CD8-positive, alpha-beta T cell (primary cell): ENCODE measurements at regions of chr17 and their contacts with region 1.

Region 1: GRCh38 chr17:19766422-19767270 is 18.5 kb upstream of the ALDH3A1 start:
- DNase-seq: peak; percentile 55 to 90 (median 78)
- ATAC-seq: peak; percentile 92
- H3K4me3 ChIP-seq: no peak overlapping the region
- H3K4me3 Mint-ChIP-seq: no peak overlapping the region
- H3K27ac ChIP-seq: no peak overlapping the region
- H3K27ac Mint-ChIP-seq: no peak overlapping the region
- H3K4me1 ChIP-seq: peaks cover 22% of the 10 kb centered on the region
- H3K4me1 Mint-ChIP-seq: peaks cover 22% of the 10 kb centered on the region
- H3K27me3 ChIP-seq: no peaks in the 10 kb centered on the region
- H3K27me3 Mint-ChIP-seq: peaks cover 7% of the 10 kb centered on the region
- CTCF ChIP-seq: peak; percentile 93

Region 2: DNA sequence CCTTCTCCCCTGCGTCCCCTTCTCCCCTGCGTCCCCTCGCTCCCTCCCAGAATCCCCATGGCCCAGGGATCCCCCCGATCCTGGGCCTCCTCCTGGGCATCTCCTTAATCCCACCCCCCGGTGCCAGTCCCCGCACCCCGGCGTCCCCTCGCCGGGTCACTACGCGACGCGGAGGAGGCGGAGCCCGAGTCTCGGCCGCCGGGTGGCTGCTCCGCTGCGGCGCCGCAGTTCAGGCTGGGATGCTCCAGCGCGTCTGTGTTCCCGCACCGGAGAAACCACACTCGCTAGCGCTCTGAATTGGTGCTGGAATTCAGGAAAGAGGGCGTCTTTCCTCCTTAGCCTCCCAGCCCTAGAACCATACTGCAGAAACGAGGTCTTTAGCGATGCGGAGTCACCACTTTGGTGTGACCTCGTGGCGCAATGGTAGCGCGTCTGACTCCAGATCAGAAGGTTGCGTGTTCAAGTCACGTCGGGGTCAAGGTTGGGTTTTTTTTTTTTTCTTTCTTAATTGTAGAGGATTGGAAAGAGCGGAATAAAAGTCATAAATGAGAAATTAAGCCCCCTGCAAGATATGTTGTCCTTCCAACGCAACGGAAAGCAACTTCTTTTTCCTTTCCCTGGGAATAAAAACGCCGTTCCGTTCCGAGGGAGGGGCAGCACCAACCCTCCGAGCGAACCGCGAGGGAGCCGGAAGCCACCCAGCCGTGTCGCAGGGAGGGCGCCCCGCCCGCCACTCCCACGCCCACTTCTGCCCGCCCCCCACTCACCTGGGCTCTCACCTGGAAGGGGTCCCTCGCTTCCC is 258.7 kb before region 1 on chr17:
- CTCF ChIA-PET with region 1: interaction called, 79 read pairs
- POLR2A ChIA-PET with region 1: interaction called, 4 read pairs
- intact Hi-C with region 1: no loop called
- DNase-seq: peak; percentile 79 to 95 (median 87)
- ATAC-seq: peak; percentile 73
- H3K4me3 ChIP-seq: peak overlapping the region; percentile 73 to 78
- H3K4me3 Mint-ChIP-seq: peak overlapping the region; percentile 87
- H3K27ac ChIP-seq: peak overlapping the region; percentile 19 to 62
- H3K27ac Mint-ChIP-seq: peak overlapping the region; percentile 98
- H3K4me1 ChIP-seq: peaks cover 7% of the 10 kb centered on the region
- H3K4me1 Mint-ChIP-seq: peaks cover 7% of the 10 kb centered on the region
- H3K27me3 ChIP-seq: no peaks in the 10 kb centered on the region
- H3K27me3 Mint-ChIP-seq: no peaks in the 10 kb centered on the region
- CTCF ChIP-seq: no peak

Region 3: GRCh38 chr17:19513897-19514488 is 252.7 kb before region 1 on chr17:
- CTCF ChIA-PET with region 1: interaction called, 84 read pairs
- POLR2A ChIA-PET with region 1: interaction called, 4 read pairs
- intact Hi-C with region 1: loop called (anchors 1 kb)
- DNase-seq: peak; percentile 30 to 81 (median 69)
- ATAC-seq: peak; percentile 70
- H3K4me3 ChIP-seq: no peak overlapping the region
- H3K4me3 Mint-ChIP-seq: no peak overlapping the region
- H3K27ac ChIP-seq: no peak overlapping the region
- H3K27ac Mint-ChIP-seq: no peak overlapping the region
- H3K4me1 ChIP-seq: no peaks in the 10 kb centered on the region
- H3K4me1 Mint-ChIP-seq: no peaks in the 10 kb centered on the region
- H3K27me3 ChIP-seq: no peaks in the 10 kb centered on the region
- H3K27me3 Mint-ChIP-seq: no peaks in the 10 kb centered on the region
- CTCF ChIP-seq: peak; percentile 89

Region 4: DNA sequence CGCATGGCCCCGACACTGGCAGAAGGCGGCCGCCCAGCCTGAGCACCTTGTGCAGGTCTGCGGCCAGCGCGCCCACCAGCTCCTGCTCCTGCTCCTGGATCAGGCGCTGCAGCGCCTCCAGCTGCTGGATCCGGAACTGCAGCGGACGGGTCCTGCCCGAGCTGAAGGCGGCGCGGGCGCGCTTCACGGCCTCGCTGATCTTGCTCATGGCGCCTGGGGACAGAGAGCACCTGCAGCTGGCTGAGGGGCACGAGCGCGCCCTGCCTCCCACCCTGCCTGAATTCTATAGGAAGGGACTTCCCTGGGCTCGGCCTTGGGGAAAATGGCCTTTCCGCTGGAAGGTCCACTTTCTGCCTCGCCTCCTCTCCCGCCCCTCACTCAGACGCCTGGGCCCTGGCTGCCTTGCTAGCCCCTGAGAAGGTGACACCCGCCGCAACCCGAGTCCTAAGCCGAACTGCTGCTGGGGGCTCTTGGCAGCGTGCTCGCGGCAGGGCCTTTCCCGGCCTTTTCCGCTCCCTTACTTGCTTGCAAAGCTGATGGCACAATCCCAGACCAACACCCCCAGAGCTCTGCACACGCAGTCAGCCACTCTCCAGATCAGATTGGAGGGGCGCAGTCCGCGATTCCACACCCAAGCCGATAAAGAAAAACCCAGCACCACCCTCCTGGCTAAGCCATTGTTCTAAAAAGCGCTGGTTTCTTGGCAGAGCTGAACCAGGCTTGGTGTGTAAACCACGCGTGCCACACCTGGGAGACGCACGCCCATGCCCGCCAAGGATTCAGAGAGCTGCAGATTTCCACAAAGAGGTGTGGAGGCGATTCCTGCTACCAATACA is 21.5 kb before region 1 on chr17:
- CTCF ChIA-PET with region 1: interaction called, 17 read pairs
- POLR2A ChIA-PET with region 1: no interaction called
- intact Hi-C with region 1: no loop called
- DNase-seq: peak; percentile 72 to 90 (median 85)
- ATAC-seq: peak; percentile 98
- H3K4me3 ChIP-seq: peak overlapping the region; percentile 26 to 31
- H3K4me3 Mint-ChIP-seq: peak overlapping the region; percentile 67
- H3K27ac ChIP-seq: no peak overlapping the region
- H3K27ac Mint-ChIP-seq: no peak overlapping the region
- H3K4me1 ChIP-seq: peaks cover 5% of the 10 kb centered on the region
- H3K4me1 Mint-ChIP-seq: peaks cover 8% of the 10 kb centered on the region
- H3K27me3 ChIP-seq: no peaks in the 10 kb centered on the region
- H3K27me3 Mint-ChIP-seq: peaks cover 11% of the 10 kb centered on the region
- CTCF ChIP-seq: peak; percentile 77

Region 5: DNA sequence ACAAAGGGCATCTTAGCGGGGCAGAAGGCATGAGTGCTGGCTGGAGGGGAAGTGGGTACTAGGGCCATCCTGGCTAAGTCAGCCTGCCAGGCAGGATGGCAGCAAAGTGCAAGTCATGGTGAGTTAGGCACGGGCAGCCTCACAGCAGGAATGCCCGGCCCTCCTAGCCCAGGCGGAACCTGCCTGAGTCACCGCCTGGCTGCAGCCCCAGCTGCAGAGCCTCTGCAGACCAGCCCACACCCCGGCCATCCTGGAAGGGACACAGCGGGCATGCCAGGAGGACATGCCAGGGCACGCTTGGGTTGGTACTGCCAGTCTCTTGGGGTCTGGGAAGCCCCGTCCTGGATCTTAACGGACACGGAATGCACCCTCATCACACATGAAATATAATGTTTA is 13.6 kb before region 1 on chr17:
- CTCF ChIA-PET with region 1: interaction called, 21 read pairs
- POLR2A ChIA-PET with region 1: no interaction called
- intact Hi-C with region 1: no loop called
- DNase-seq: peak in 1 of 9 experiments; percentile 29
- ATAC-seq: no peak
- H3K4me3 ChIP-seq: no peak overlapping the region
- H3K4me3 Mint-ChIP-seq: no peak overlapping the region
- H3K27ac ChIP-seq: no peak overlapping the region
- H3K27ac Mint-ChIP-seq: no peak overlapping the region
- H3K4me1 ChIP-seq: no peaks in the 10 kb centered on the region
- H3K4me1 Mint-ChIP-seq: no peaks in the 10 kb centered on the region
- H3K27me3 ChIP-seq: no peaks in the 10 kb centered on the region
- H3K27me3 Mint-ChIP-seq: peaks cover 21% of the 10 kb centered on the region
- CTCF ChIP-seq: no peak

Region 6: GRCh38 chr17:19781488-19782458 is 15.1 kb after region 1 on chr17:
- CTCF ChIA-PET with region 1: interaction called, 18 read pairs
- POLR2A ChIA-PET with region 1: interaction called, 6 read pairs
- intact Hi-C with region 1: no loop called
- DNase-seq: no peak
- ATAC-seq: no peak
- H3K4me3 ChIP-seq: no peak overlapping the region
- H3K4me3 Mint-ChIP-seq: no peak overlapping the region
- H3K27ac ChIP-seq: no peak overlapping the region
- H3K27ac Mint-ChIP-seq: no peak overlapping the region
- H3K4me1 ChIP-seq: no peaks in the 10 kb centered on the region
- H3K4me1 Mint-ChIP-seq: no peaks in the 10 kb centered on the region
- H3K27me3 ChIP-seq: no peaks in the 10 kb centered on the region
- H3K27me3 Mint-ChIP-seq: no peaks in the 10 kb centered on the region
- CTCF ChIP-seq: no peak

Region 7: GRCh38 chr17:19873346-19873745 is 106.7 kb after region 1 on chr17:
- CTCF ChIA-PET with region 1: no interaction called
- POLR2A ChIA-PET with region 1: no interaction called
- intact Hi-C with region 1: no loop called
- DNase-seq: no peak
- ATAC-seq: no peak
- H3K4me3 ChIP-seq: no peak overlapping the region
- H3K4me3 Mint-ChIP-seq: no peak overlapping the region
- H3K27ac ChIP-seq: no peak overlapping the region
- H3K27ac Mint-ChIP-seq: peak overlapping the region; percentile 58
- H3K4me1 ChIP-seq: peaks cover 58% of the 10 kb centered on the region
- H3K4me1 Mint-ChIP-seq: peaks cover 63% of the 10 kb centered on the region
- H3K27me3 ChIP-seq: no peaks in the 10 kb centered on the region
- H3K27me3 Mint-ChIP-seq: no peaks in the 10 kb centered on the region
- CTCF ChIP-seq: no peak